ENCODE measurements at regions of chr1 and their contacts with region 1.

Region 1: GRCh38 chr1:184283999-184284398 is 102.8 kb upstream of the C1orf21 start:
- DNase-seq: peak; percentile 21
- H3K4me3 ChIP-seq: no peak overlapping the region
- H3K27ac ChIP-seq: no peak overlapping the region
- H3K4me1 ChIP-seq: no peaks in the 10 kb centered on the region
- H3K27me3 ChIP-seq: no peaks in the 10 kb centered on the region
- CTCF ChIP-seq: no peak

Region 2: DNA sequence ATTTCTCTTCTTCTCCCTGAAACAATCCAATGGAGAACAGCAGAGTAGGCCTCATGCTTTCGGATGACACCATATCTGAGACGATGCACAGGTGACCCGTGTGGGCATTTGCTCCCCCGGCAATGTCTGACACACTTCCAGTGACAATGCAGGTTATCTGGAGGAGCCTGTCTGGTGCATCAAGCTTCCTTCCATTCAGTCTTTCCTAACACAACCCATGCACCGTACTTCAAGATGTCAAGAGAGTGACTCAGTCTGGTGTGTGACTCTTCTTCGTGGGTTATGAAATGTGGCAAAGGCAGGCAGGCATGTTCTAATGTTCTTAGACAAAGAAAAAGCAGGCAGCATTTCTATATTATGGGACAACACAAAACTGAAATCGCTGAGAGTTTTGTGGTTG is 311.6 kb after region 1 on chr1:
- CTCF ChIA-PET with region 1: no interaction called
- POLR2A ChIA-PET with region 1: no interaction called
- intact Hi-C with region 1: no loop called
- DNase-seq: no peak
- H3K4me3 ChIP-seq: no peak overlapping the region
- H3K27ac ChIP-seq: no peak overlapping the region
- H3K4me1 ChIP-seq: peaks cover 4% of the 10 kb centered on the region
- H3K27me3 ChIP-seq: no peaks in the 10 kb centered on the region
- CTCF ChIP-seq: no peak

Region 3: DNA sequence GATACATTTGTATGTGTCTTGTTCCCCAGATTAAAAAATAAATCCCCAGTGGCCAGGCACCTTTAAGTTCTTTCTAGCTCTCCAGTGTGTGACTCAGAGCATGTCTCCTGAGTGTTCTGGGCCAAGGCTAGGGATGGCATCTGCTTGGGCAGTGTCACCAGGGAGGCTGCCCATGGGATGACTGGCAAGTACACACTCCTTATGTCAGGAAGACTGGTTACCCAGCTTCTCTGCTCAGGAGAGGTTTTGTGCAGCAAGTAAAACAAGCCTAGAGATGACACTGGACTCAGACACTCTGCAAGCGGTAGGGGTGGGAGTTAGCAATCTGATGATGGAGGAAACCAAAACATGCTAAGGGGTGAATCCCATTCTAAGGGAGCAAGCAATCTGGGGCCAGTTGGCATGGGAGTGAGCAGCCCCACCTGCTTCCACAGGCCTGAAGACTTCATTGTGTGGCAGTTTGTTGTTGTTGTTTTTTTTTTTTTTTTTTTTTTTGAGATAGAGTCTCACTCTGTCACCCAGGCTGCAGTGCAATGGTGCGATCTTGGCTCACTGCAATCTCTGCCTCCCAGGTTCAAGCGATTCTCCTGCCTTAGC is 333.5 kb after region 1 on chr1:
- CTCF ChIA-PET with region 1: no interaction called
- POLR2A ChIA-PET with region 1: interaction called, 13 read pairs
- intact Hi-C with region 1: no loop called
- DNase-seq: no peak
- H3K4me3 ChIP-seq: no peak overlapping the region
- H3K27ac ChIP-seq: no peak overlapping the region
- H3K4me1 ChIP-seq: peaks cover 11% of the 10 kb centered on the region
- H3K27me3 ChIP-seq: no peaks in the 10 kb centered on the region
- CTCF ChIP-seq: no peak

Measured in A673 (cell line).